ENCODE measurements at regions of chr20 and their contacts with region 1.

Region 1: GRCh38 chr20:11544029-11544678 is 373.5 kb upstream of the BTBD3 start:
- DNase-seq: peak; percentile 94
- ATAC-seq: peak; percentile 91
- H3K4me3 ChIP-seq: peak overlapping the region; percentile 55
- H3K27ac ChIP-seq: no peak overlapping the region
- H3K4me1 ChIP-seq: peaks cover 11% of the 10 kb centered on the region
- H3K27me3 ChIP-seq: no peaks in the 10 kb centered on the region
- CTCF ChIP-seq: peak; percentile 90

Region 2: DNA sequence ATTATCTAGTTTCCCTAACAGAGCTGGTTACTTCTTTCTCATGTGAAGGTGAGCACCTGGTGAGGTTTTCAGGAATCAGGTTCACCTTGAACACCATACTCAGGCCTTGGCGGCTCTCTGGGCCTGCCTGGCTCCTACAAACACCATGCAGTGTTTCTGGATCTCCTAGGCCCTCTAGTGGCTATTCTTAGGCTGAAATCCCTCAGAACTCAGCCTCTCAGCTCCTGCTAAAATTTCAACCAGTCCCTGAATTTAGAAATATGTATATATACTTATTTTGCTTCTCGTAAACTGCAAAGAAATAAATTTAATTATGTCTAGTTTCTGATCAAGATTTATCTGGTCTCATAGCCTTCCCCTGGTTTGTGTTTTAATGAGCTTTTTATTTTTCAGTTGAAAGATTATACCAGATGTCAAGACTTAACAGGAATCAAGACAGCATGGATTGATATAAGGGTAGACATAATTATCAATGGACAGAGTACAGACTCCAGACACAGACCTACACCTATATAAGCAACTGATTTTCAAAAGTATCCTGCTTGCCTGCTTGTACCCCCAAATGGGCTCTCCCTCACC is 1453.5 kb before region 1 on chr20:
- CTCF ChIA-PET with region 1: no interaction called
- POLR2A ChIA-PET with region 1: no interaction called
- intact Hi-C with region 1: loop called (anchors 5 kb)
- DNase-seq: peak; percentile 81
- ATAC-seq: peak; percentile 84
- H3K4me3 ChIP-seq: no peak overlapping the region
- H3K27ac ChIP-seq: no peak overlapping the region
- H3K4me1 ChIP-seq: peaks cover 19% of the 10 kb centered on the region
- H3K27me3 ChIP-seq: peaks cover 2% of the 10 kb centered on the region; the same call in 1 of the 2 replicates
- CTCF ChIP-seq: peak; percentile 93

Region 3: DNA sequence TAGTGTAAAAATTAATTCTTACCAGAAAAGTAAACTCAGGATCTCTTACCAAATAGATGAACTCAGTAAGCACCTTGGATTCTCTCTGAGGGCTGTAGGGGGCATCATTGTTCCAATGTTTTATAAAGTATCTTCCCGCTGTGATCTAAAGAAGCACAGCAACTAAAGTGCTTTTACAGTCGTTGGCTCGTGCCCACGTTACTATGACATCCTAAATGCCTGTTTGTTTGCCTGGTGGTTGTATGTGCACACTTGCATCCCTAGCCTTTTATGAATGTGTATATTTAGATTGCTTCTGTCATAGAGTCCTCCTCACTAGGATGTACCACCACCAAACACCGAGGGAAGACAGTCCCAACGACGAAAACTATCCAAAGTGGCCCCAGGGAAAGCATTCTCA is 1074.6 kb before region 1 on chr20:
- CTCF ChIA-PET with region 1: no interaction called
- POLR2A ChIA-PET with region 1: no interaction called
- intact Hi-C with region 1: loop called (anchors 2 kb)
- DNase-seq: peak; percentile 87
- ATAC-seq: peak; percentile 79
- H3K4me3 ChIP-seq: no peak overlapping the region
- H3K27ac ChIP-seq: peak overlapping the region; percentile 23
- H3K4me1 ChIP-seq: peaks cover 18% of the 10 kb centered on the region
- H3K27me3 ChIP-seq: no peaks in the 10 kb centered on the region
- CTCF ChIP-seq: peak; percentile 80

Region 4: DNA sequence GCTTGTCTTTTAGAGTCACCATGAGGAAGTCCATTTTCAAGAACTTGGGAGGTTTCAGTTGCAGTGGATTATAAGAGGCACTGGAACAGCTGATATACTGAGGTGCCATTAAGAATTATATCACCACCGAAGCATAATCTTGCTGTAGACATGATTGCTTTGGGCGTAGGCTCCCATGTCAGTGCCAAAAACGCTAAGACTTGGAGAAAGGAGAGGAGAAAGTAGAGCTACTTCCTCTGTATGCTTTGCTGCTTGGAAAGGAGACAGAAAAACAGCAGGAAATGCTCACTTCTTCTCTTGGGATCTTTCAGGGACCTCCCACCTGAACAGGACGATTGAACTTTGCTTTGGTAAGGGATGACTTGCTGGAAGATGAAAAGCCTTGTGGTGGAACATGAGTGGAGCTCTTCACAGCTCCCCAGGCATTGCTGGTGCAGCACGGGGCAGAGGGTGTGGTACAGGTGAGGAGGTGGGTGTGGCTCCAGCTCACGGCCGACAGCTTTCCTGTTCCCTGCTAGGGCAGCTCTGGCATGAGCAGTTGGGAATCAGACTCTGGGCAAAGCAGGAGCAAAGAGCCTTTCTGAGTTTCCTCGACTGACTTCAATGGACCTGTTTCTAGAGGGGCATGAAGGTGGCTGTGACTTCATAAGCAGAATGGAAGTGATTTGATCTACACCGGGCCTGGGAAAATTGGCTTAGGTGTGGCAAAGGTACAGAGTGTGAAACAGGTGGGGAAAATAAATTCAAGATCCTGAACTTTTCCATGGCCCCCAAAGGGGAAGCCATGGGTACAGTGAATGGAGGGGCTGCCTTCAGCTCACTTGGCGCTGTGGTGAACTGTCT is 679.9 kb before region 1 on chr20:
- CTCF ChIA-PET with region 1: no interaction called
- POLR2A ChIA-PET with region 1: no interaction called
- intact Hi-C with region 1: loop called (anchors 5 kb)
- DNase-seq: peak; percentile 92
- ATAC-seq: peak; percentile 70
- H3K4me3 ChIP-seq: peak overlapping the region; percentile 54
- H3K27ac ChIP-seq: peak overlapping the region; percentile 91
- H3K4me1 ChIP-seq: peaks cover 51% of the 10 kb centered on the region
- H3K27me3 ChIP-seq: no peaks in the 10 kb centered on the region
- CTCF ChIP-seq: no peak

Region 5: GRCh38 chr20:11274141-11274594 is 270.0 kb before region 1 on chr20:
- CTCF ChIA-PET with region 1: no interaction called
- POLR2A ChIA-PET with region 1: no interaction called
- intact Hi-C with region 1: loop called (anchors 1 kb)
- DNase-seq: peak; percentile 89
- ATAC-seq: peak; percentile 97
- H3K4me3 ChIP-seq: no peak overlapping the region
- H3K27ac ChIP-seq: no peak overlapping the region
- H3K4me1 ChIP-seq: peaks cover 7% of the 10 kb centered on the region
- H3K27me3 ChIP-seq: no peaks in the 10 kb centered on the region
- CTCF ChIP-seq: peak; percentile 93

Region 6: GRCh38 chr20:11972478-11972877 is 428.3 kb after region 1 on chr20:
- CTCF ChIA-PET with region 1: no interaction called
- POLR2A ChIA-PET with region 1: no interaction called
- intact Hi-C with region 1: no loop called
- DNase-seq: no peak
- ATAC-seq: no peak
- H3K4me3 ChIP-seq: no peak overlapping the region
- H3K27ac ChIP-seq: no peak overlapping the region
- H3K4me1 ChIP-seq: no peaks in the 10 kb centered on the region
- H3K27me3 ChIP-seq: peaks cover 29% of the 10 kb centered on the region; the same call in 1 of the 2 replicates
- CTCF ChIP-seq: no peak

Measured in PC-3 (cell line).